Heart right ventricle (tissue), 16 donors: ENCODE measurements at regions of chr2 and their contacts with region 1.

Region 1: DNA sequence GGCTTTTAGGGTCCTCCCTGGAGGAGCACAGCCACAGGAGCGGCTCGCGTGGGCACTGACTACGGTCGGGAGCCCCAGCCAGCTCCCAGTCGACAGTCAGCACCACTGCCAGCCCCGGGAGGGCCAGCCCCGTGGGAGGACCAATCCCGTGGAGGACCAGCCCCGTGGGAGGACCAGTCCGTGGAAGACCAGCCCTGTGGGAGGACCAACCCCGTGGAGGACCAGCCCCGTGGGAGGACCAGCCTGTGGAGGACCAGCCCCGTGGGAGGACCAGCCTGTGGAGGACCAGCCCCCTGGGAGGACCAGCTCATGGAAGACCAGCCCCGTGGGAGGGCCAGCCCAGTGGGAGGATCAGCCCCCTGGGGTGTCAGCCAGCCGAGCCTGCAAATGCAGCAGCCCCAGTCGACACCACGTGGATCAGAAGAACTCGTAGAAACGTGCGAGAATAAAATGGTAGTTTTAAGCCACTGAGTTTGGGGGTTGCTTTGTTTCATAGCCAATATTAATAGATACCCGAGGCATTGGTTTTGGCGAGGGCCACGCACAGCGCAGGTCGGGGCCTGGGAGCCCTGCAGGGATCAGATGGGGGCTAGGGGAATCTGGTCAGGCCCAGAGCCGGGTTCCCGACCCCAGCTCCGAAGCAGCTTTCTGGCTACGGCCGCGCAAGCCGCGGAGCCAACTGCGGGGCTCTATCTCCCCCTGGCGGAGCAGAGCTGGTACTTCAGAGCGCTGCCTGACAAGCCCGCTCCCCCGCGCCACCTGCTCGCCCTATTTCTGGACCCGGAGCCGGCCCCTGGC is 73.0 kb downstream of the TEX51 start:
- DNase-seq: peak; percentile 58 to 63
- ATAC-seq: peak; percentile 81 to 94 (median 88)
- H3K4me3 ChIP-seq: peak overlapping the region in 9 of 10 donors; percentile 23 to 58 (median 46)
- H3K27ac ChIP-seq: no peak overlapping the region
- H3K4me1 ChIP-seq: peaks cover 0 to 14% (median 4%) of the 10 kb centered on the region in 9 donors
- H3K27me3 ChIP-seq: peaks cover 0 to 69% (median 35%) of the 10 kb centered on the region in 7 donors
- CTCF ChIP-seq: peak; percentile 91 to 98 (median 95)

Region 2: DNA sequence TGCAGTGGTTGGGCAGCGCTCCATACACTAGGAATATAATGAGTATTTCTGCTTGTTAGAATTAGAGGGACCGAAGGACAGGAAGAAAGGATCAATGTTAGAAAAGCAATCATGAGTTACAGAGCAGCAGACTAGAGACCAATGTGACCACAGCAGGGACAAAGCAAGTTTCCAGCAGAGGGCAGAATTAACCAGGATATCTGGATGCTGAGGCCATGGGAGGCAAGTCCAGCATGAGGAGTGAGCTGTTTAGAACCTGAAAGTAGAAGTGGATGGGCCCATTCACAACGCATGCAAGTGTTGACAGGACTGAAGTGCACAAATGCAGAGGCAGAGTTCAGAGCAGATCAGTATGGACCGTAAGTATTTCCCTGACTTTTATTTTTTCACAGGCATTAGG is 1226.2 kb before region 1 on chr2:
- intact Hi-C with region 1: loop called in 4 of 10 experiments (anchors 5 to 10 kb)
- DNase-seq: peak in 1 of 2 donors; percentile 26
- ATAC-seq: peak in 5 of 8 donors; percentile 26 to 73 (median 59)
- H3K4me3 ChIP-seq: no peak overlapping the region
- H3K27ac ChIP-seq: no peak overlapping the region
- H3K4me1 ChIP-seq: no peaks in the 10 kb centered on the region
- H3K27me3 ChIP-seq: no peaks in the 10 kb centered on the region
- CTCF ChIP-seq: peak in 6 of 9 donors; percentile 39 to 50 (median 48)

Region 3: GRCh38 chr2:126527836-126528507 is 443.7 kb before region 1 on chr2:
- intact Hi-C with region 1: loop called in 1 of 10 experiments (anchors 5 kb)
- DNase-seq: peak; percentile 51 to 70
- ATAC-seq: peak in 7 of 8 donors; percentile 70 to 90 (median 78)
- H3K4me3 ChIP-seq: no peak overlapping the region
- H3K27ac ChIP-seq: no peak overlapping the region
- H3K4me1 ChIP-seq: no peaks in the 10 kb centered on the region
- H3K27me3 ChIP-seq: no peaks in the 10 kb centered on the region
- CTCF ChIP-seq: peak; percentile 40 to 84 (median 72)

Region 4: DNA sequence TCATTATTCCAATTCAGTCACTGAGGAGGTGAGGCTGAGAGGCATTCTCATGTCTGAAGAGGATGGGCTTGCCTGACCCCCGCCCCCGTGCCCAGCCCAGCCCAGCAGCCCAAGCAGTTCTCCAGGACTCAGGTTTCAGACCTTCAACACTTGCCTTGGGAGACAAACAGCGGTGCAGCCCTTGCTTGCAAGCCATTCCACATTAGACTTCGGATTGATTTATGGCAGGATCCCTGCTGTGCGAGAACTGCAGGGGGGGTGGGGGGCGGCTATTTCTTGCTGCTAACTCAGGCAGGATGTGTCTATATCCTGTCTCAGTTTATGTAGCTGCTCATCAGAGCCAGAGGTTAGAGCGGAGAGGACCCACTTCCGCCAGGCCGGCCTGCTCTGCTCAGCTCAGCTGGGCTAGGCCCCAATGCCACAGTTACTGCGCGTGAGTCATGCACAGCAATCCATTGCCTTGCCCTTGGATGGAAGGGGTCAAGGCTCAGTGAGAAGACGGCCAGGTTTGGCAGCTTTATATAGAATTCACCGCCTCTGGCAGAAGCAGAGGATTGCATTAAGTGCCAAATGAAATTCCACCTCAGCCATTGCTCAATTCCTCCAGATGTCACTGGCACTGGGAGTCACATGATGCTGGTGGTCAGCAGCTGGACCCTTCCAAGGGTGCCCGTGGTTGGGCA is 313.9 kb before region 1 on chr2:
- intact Hi-C with region 1: no loop called
- DNase-seq: peak; percentile 76 to 83
- ATAC-seq: peak; percentile 50 to 91 (median 72)
- H3K4me3 ChIP-seq: peak overlapping the region; percentile 67 to 90 (median 77)
- H3K27ac ChIP-seq: peak overlapping the region; percentile 96 to 100 (median 99)
- H3K4me1 ChIP-seq: peaks cover 22 to 77% (median 70%) of the 10 kb centered on the region in 9 donors
- H3K27me3 ChIP-seq: no peaks in the 10 kb centered on the region
- CTCF ChIP-seq: peak in 1 of 9 donors; percentile 6

Region 5: GRCh38 chr2:127305990-127306585 is 334.4 kb after region 1 on chr2:
- intact Hi-C with region 1: no loop called
- DNase-seq: no peak
- ATAC-seq: no peak
- H3K4me3 ChIP-seq: no peak overlapping the region
- H3K27ac ChIP-seq: peak overlapping the region in 1 of 10 donors; percentile 5
- H3K4me1 ChIP-seq: no peaks in the 10 kb centered on the region
- H3K27me3 ChIP-seq: no peaks in the 10 kb centered on the region
- CTCF ChIP-seq: no peak